ENCODE measurements at regions of chr2 and their contacts with region 1.

Region 1: DNA sequence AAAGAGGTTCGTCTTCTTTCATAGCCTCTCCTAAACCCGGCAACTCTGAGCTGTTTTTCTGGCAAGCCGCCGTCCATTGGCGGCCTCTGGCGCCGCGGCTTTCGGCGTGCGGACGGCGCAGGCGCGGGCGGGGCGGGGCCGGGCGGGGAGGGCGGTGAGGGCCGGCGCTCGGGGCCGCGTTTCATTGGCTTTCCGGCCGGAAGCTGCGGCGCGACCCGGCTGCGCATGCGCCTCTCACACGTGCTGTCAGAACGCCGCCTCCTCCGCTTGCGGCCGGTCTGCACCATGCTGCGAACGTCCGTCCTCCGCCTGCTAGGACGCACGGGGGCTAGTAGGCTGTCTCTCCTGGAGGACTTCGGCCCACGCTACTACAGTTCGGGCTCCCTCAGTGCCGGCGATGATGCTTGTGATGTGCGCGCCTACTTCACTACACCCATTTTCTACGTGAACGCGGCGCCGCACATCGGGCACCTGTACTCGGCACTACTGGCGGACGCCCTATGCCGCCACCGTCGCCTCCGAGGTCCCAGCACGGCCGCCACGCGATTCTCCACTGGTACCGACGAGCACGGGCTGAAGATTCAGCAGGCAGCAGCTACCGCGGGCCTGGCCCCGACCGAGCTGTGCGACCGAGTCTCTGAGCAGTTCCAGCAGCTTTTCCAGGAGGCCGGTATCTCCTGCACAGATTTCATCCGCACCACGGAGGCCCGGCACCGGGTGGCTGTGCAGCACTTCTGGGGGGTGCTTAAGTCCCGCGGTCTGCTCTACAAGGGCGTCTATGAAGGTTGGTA is at the start of gene MARS2:
- DNase-seq: peak; percentile 92 to 96
- ATAC-seq: peak; percentile 94 to 99 (median 98)
- H3K4me3 ChIP-seq: peak within 1 kb of the TSS; percentile 59 to 99 (median 92)
- H3K27ac ChIP-seq: peak within 1 kb of the TSS; percentile 43 to 91 (median 85)
- H3K4me1 ChIP-seq: peaks cover 2 to 47% (median 40%) of the 10 kb centered on the region in 9 donors
- H3K27me3 ChIP-seq: no peaks in the 10 kb centered on the region
- CTCF ChIP-seq: peak in 2 of 9 donors; percentile 8 to 19
- total RNA-seq, gene MARS2: 5.0 to 11.5 (median 7.7) TPM

Region 2: DNA sequence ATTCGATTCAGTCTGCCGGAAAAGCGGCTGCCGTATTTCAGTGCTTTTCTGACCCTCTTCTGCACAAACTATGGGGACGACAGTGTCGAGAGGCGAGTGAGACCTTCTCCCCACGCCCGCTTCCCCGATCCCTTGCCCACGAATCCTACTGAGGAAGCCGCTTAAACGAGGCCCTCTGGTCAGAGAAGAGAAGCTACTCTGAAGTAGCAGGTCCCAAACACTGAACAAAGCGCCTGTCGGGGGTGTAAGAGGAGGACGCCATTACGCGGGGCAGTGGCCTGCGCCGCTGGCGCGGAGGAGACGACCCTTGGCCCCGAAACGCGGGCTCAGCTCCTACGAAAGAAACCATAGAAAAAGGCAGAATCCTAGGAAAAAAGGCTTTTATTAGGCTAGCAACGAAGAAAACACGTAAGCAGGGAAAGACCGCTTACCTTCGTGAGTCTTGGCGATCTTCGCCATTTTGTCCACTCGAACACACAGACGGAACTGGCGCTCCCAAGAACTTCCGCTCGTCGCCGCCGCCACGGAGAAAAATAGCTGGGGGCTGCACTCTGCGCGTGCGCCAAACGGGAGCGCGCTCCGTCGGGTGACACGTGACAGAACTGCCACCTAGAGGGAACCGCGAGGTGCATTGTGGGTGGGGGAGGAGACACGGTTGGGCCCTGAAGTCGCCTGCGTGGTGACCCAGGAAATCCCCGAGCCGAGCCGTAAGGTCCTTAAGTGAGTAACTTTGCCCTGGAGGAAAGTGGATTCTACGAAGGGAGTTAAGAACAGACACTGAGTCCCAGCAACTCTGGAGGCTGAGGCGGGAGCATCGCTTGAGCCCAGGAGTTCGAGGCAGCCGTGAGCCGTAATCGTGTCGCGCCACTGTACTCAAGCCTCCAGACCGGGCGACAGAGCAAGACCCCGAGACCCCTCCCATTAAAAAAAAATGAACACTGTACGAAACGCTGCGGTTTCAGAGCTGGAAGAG is 270.5 kb before region 1 on chr2 and contains the start of gene SF3B1:
- intact Hi-C with region 1: loop called in 3 of 10 experiments (anchors 2 to 10 kb)
- DNase-seq: peak; percentile 98 to 99
- ATAC-seq: peak; percentile 97 to 99 (median 99)
- H3K4me3 ChIP-seq: peak within 1 kb of the TSS; percentile 69 to 100 (median 88)
- H3K27ac ChIP-seq: peak within 1 kb of the TSS; percentile 90 to 99 (median 96)
- H3K4me1 ChIP-seq: peaks cover 11 to 52% (median 48%) of the 10 kb centered on the region in 9 donors
- H3K27me3 ChIP-seq: no peaks in the 10 kb centered on the region
- CTCF ChIP-seq: no peak
- total RNA-seq, gene SF3B1: 132 to 162 (median 151) TPM

Region 3: DNA sequence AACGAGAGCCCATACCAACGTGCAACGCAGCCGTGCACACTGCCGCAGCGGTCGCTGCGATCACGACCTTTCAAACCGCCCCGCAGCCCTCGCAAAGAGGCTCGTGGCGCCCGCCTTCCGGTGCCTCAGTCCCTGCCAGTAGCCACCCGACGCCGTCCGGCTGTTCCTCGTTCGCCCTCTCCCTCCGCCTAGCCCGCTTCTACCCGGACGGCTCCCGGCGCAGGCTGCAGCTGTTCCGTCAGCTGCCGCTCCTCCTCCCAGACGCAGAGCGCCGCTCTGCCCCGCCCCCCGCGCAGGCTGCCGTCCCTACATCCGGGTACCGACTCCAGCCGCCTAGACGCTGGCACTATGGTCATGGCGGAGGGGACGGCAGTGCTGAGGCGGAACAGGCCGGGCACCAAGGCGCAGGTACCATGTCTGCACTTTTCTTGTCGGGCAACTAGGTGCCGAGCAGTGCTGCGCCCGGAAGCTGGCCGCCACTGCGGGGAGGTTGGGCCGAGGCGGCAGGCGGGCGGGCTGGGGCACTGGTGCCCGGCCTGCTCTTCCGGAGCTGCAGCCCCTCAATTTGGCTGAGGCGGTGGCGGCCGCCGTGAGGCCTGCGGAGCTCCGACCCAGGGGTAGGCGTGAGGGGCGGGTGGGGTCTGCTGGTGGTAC is 189.4 kb before region 1 on chr2 and contains the start of gene MOB4:
- intact Hi-C with region 1: loop called in 5 of 10 experiments (anchors 5 to 10 kb)
- DNase-seq: peak; percentile 95 to 97
- ATAC-seq: peak; percentile 98 to 100 (median 99)
- H3K4me3 ChIP-seq: peak within 1 kb of the TSS; percentile 78 to 96 (median 84)
- H3K27ac ChIP-seq: peak within 1 kb of the TSS; percentile 90 to 99 (median 94)
- H3K4me1 ChIP-seq: peaks cover 0 to 43% (median 30%) of the 10 kb centered on the region in 9 donors
- H3K27me3 ChIP-seq: no peaks in the 10 kb centered on the region
- CTCF ChIP-seq: peak in 1 of 9 donors; percentile 23
- total RNA-seq, gene MOB4: 20.9 to 43.2 (median 30.5) TPM

Region 4: GRCh38 chr2:197647961-197648690 is 57.2 kb before region 1 on chr2:
- intact Hi-C with region 1: no loop called
- DNase-seq: no peak
- ATAC-seq: peak in 2 of 8 donors; percentile 57 to 68
- H3K4me3 ChIP-seq: no peak overlapping the region
- H3K27ac ChIP-seq: peak overlapping the region in 3 of 10 donors; percentile 43 to 65 (median 53)
- H3K4me1 ChIP-seq: peaks cover 0 to 20% (median 0%) of the 10 kb centered on the region in 9 donors
- H3K27me3 ChIP-seq: no peaks in the 10 kb centered on the region
- CTCF ChIP-seq: no peak

Region 5: DNA sequence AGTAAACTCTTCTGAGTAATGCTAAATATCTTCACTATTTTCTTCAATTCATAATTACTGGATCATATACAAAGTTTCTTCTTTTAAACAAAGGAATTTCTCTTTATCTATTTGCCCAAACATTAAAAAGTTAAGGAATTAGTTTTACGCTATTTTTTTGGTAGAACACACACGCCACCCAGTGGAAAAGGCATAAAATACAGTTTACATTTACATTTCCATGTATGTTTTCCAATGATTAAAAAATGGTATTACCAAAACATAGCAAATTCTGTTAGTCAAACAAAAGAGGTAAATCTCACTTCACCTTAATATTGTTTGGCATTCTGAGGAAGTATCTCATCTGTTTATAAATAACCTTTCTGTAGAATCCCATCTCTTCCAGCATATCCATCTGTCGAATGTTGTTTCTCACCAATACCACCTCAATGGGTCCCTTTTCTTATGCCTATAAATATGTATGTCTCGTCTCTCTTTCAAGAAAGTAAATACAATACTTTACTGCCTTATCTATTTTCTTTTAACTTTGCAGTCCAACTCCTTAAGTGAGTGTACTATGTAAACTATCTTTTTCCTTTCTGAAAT is 72.6 kb after region 1 on chr2:
- intact Hi-C with region 1: loop called (anchors 2 to 5 kb)
- DNase-seq: no peak
- ATAC-seq: no peak
- H3K4me3 ChIP-seq: no peak overlapping the region
- H3K27ac ChIP-seq: no peak overlapping the region
- H3K4me1 ChIP-seq: no peaks in the 10 kb centered on the region
- H3K27me3 ChIP-seq: peaks cover 0 to 5% (median 0%) of the 10 kb centered on the region in 7 donors
- CTCF ChIP-seq: peak; percentile 57 to 87 (median 73)

Region 6: GRCh38 chr2:197828464-197829135 is 123.3 kb after region 1 on chr2:
- intact Hi-C with region 1: no loop called
- DNase-seq: no peak
- ATAC-seq: no peak
- H3K4me3 ChIP-seq: no peak overlapping the region
- H3K27ac ChIP-seq: no peak overlapping the region
- H3K4me1 ChIP-seq: peaks cover 0 to 28% (median 11%) of the 10 kb centered on the region in 9 donors
- H3K27me3 ChIP-seq: no peaks in the 10 kb centered on the region
- CTCF ChIP-seq: no peak